ENCODE measurements at regions of chr20 and their contacts with region 1.

Region 1: GRCh38 chr20:645318-646106 is 7.5 kb downstream of the SRXN1 start:
- DNase-seq: peak; percentile 89
- CTCF ChIP-seq: peak; percentile 97

Region 2: DNA sequence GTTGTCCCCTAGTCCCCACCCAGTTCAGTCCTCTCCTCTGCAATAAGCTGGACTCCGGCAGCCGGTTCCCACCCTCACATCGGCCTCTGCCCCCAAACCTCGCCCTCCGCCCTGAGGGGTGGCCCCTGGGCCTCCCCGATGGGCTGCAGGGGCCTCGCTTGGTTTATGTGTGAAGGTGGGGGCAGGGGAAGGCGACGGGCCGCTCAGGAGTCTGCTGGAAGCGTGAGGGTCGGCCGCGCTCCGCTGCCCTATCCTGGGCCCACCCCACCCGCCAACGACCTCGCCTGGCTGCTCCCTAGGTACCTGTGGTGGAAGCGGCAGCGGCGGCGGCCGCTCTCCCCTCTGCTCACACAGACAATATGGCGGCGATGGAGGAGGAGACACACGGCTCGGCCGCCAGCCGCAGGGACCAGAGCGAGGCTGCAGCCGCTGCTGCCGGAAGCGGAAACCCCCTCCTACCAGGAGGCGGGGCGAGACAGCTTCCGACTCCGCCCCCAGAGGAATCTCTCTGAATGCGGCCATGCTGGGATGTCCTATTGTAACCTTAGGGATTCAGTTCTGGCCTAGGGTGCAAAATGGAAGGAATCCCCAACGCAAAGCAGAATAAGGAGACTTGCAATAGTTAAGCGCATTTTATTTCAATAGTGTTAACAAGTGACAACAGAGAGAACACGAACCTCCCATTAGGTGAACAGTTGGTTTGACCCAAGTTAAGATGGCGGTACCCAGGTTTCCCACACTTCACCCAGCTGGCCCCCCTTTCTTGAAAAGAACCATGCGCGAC is 102.0 kb before region 1 on chr20 and contains the start of gene CSNK2A1:
- CTCF ChIA-PET with region 1: interaction called, 19 read pairs
- POLR2A ChIA-PET with region 1: no interaction called
- DNase-seq: peak; percentile 95
- CTCF ChIP-seq: no peak

Region 3: DNA sequence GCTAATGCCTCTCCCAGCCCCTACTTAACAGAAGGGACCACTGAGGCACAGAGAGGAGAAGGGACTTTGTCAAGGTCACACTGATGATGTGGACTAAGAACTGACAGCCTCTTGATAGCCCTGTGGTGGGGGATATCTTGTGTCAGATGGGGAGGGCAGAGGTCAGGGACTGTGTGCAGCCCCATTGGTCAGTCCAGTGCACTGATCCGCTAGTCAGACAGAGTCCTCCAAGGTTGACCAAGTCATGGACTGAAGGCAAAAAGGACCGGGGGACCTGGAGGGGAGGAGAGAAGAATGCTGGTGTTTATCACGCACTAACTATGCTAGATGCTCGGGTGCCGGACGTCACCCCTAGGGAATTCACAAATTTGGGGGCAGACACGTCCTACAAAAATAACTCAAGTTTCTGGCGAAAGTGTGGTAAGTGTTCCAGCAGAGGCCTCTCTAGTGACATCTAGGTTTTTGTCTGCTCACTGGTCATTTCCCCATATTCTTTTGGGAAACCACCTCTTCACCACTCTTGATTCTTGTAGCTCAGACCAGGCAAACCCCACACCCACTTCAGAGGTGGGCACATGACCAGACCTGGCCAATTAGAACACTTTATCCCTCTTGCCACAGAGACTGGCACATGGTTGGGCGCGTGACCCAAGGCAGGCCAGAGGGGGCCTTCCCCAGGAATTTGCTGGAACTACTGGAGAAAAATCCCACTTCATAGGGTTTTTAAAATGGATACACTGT is 56.4 kb before region 1 on chr20:
- CTCF ChIA-PET with region 1: interaction called, 24 read pairs
- POLR2A ChIA-PET with region 1: no interaction called
- DNase-seq: peak; percentile 73
- CTCF ChIP-seq: peak; percentile 30

Region 4: DNA sequence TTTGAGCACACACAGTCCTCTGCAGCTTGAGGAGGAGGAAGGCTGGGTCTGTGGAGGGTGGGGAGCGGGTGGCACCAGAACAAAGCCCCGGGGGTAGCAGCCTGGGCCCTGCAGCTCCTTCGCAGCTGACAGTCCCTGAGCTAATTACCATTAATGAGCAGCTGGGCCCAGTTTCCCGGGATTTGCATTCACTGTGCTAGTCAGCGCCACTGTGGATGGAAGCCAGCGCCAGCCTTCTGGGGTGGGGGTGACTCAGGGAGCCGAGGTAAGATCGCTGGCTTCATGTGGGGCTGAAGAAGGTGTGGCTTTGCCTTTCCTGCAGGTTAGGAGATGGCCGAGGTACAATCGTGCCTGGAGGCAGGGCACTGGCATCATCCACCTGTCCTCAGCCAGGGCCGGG is 11.0 kb before region 1 on chr20:
- CTCF ChIA-PET with region 1: interaction called, 26 read pairs
- POLR2A ChIA-PET with region 1: interaction called, 3 read pairs
- DNase-seq: no peak
- CTCF ChIP-seq: no peak

Region 5: DNA sequence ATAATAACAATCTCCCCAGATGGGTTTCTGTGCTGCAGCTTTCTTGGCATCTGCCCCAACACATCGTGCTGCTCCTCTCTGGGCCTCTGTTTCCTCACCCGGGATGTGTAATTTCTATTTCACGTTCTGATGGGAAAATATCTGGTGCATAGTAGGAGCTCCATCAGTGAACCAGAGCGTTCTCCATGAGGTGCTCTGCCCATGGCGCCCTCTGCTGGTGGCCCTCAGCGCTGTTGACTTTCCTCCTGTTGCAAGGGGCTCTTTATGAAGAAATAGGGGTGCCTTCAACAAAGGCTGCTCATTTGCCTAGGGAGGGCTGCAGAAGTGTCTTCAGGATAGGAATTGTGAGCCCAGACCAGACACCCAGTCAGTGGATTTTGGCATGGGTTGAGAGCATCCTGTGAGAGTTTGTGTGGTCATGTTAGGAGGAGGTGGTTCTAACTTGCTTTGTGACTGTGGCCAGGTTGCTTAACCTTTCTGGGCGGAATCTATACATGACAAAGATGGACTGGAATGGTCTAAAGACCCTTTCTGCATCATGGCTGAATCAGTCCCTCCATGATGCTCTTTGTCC is 22.0 kb after region 1 on chr20:
- CTCF ChIA-PET with region 1: interaction called, 69 read pairs
- POLR2A ChIA-PET with region 1: no interaction called
- DNase-seq: peak; percentile 70
- CTCF ChIP-seq: peak; percentile 83

Measured in GM10248 (cell line).